ENCODE measurements at regions of chr6 and their contacts with region 1.

Region 1: DNA sequence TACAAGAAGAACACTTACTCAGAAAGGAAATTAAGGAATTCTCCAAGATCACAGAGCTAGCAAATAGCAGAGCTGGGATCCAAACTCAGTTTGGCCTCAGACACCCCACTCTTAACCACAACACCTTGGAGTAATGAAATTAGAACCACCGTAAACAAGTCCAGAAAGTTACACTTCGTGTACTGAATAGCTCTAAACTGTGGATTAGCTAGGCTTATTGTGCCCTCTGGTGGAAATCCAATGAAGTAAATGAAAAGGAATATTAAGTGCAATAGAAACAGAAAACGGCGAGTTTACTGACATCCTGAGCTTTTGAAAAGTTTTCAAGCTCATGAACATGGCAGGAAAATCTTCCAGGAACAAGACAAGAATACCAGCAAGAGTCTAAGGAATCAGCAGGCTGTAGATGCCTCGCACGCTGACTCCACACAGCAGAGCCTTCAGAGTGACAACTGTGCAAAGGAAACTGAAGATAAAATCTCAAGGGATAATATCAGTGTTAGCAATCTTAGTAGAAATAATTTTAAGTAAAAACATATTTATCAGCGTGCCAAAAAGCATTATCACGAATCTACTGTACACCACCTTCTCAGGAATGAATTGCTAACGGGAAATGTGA is 34.6 kb downstream of the FBXO5 start:
- DNase-seq: peak; percentile 66
- ATAC-seq: peak; percentile 54
- H3K4me3 ChIP-seq: peak overlapping the region; percentile 59; the same call in 1 of the 2 replicates
- H3K27ac ChIP-seq: no peak overlapping the region
- H3K4me1 ChIP-seq: peaks cover 52% of the 10 kb centered on the region
- H3K27me3 ChIP-seq: no peaks in the 10 kb centered on the region; the same call in 1 of the 2 replicates
- CTCF ChIP-seq: peak; percentile 83

Region 2: DNA sequence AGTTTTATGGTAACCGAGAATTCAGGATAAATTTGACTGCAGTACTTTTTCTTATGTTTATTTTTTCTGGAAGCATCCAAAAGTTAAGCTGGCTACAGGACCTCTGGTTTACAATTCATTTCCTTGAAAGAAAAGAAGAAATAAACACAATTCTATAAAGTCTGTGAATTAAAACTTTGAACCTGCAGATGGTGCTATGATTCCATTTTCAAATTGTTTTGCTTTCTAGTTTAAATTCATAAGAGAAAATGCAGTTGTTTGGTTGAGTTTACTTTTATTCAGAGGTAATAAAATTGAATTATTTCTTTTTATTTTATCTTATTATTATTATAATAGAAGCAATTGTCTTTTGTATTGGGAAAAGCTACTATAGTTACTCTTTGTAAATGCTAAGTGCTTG is 199.4 kb before region 1 on chr6:
- CTCF ChIA-PET with region 1: interaction called, 6 read pairs
- POLR2A ChIA-PET with region 1: no interaction called
- intact Hi-C with region 1: loop called (anchors 2 kb)
- DNase-seq: peak; percentile 40
- ATAC-seq: no peak
- H3K4me3 ChIP-seq: no peak overlapping the region
- H3K27ac ChIP-seq: no peak overlapping the region
- H3K4me1 ChIP-seq: no peaks in the 10 kb centered on the region
- H3K27me3 ChIP-seq: peaks cover 35% of the 10 kb centered on the region
- CTCF ChIP-seq: peak; percentile 44

Region 3: GRCh38 chr6:152863618-152864326 is 84.5 kb before region 1 on chr6:
- CTCF ChIA-PET with region 1: interaction called, 4 read pairs
- POLR2A ChIA-PET with region 1: no interaction called
- intact Hi-C with region 1: loop called (anchors 1 kb)
- DNase-seq: peak; percentile 74
- ATAC-seq: peak; percentile 90
- H3K4me3 ChIP-seq: no peak overlapping the region
- H3K27ac ChIP-seq: no peak overlapping the region
- H3K4me1 ChIP-seq: no peaks in the 10 kb centered on the region
- H3K27me3 ChIP-seq: peaks cover 58% of the 10 kb centered on the region
- CTCF ChIP-seq: peak; percentile 75

Measured in PC-3 (cell line).